ENCODE measurements at regions of chr1 and their contacts with region 1.

Region 1: GRCh38 chr1:58515794-58516401 is 30.6 kb downstream of the OMA1 start:
- H3K4me3 Mint-ChIP-seq: no peak overlapping the region
- H3K27ac Mint-ChIP-seq: peak overlapping the region; percentile 63
- H3K4me1 Mint-ChIP-seq: peaks cover 11% of the 10 kb centered on the region
- H3K27me3 Mint-ChIP-seq: no peaks in the 10 kb centered on the region

Region 2: GRCh38 chr1:58546520-58547308 is 30.8 kb after region 1 on chr1 and contains the start of gene OMA1:
- intact Hi-C with region 1: loop called (anchors 1 kb)
- H3K4me3 Mint-ChIP-seq: peak within 1 kb of the TSS; percentile 79
- H3K27ac Mint-ChIP-seq: peak within 1 kb of the TSS; percentile 93
- H3K4me1 Mint-ChIP-seq: peaks cover 19% of the 10 kb centered on the region
- H3K27me3 Mint-ChIP-seq: no peaks in the 10 kb centered on the region

Region 3: GRCh38 chr1:58652651-58653184 is 136.8 kb after region 1 on chr1:
- intact Hi-C with region 1: loop called (anchors 1 kb)
- H3K4me3 Mint-ChIP-seq: no peak overlapping the region
- H3K27ac Mint-ChIP-seq: no peak overlapping the region
- H3K4me1 Mint-ChIP-seq: peaks cover 11% of the 10 kb centered on the region
- H3K27me3 Mint-ChIP-seq: peaks cover 1% of the 10 kb centered on the region

Region 4: GRCh38 chr1:59759156-59759925 is 1243.4 kb after region 1 on chr1:
- intact Hi-C with region 1: loop called (anchors 2 kb)
- H3K4me3 Mint-ChIP-seq: peak overlapping the region; percentile 61
- H3K27ac Mint-ChIP-seq: peak overlapping the region; percentile 42
- H3K4me1 Mint-ChIP-seq: peaks cover 16% of the 10 kb centered on the region
- H3K27me3 Mint-ChIP-seq: no peaks in the 10 kb centered on the region